ENCODE measurements at regions of chr4 and their contacts with region 1.

Region 1: DNA sequence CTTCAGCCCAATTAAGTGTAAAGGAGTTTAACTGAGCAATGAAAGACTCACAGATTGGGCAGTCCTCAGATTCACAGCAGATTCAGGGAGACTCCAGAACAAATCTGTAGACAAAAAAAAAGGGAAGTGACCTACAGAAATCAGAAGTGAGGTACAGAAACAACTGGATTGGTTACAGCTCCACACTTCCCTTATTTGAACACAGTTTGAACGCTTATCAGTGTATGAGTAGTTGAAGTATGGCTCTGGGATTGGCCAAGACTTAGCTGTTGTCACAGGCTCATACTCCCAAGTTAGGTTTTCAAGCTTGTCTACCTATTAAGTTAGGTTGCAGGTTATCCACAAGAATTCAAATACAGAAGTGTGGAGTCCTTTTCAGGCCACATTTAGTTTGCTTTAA is 112.4 kb upstream of the ELOVL6 start:
- DNase-seq: no peak
- CTCF ChIP-seq: no peak

Region 2: GRCh38 chr4:109798866-109799265 is 511.9 kb before region 1 on chr4:
- in situ Hi-C with region 1: no loop called
- DNase-seq: no peak
- CTCF ChIP-seq: no peak

Region 3: DNA sequence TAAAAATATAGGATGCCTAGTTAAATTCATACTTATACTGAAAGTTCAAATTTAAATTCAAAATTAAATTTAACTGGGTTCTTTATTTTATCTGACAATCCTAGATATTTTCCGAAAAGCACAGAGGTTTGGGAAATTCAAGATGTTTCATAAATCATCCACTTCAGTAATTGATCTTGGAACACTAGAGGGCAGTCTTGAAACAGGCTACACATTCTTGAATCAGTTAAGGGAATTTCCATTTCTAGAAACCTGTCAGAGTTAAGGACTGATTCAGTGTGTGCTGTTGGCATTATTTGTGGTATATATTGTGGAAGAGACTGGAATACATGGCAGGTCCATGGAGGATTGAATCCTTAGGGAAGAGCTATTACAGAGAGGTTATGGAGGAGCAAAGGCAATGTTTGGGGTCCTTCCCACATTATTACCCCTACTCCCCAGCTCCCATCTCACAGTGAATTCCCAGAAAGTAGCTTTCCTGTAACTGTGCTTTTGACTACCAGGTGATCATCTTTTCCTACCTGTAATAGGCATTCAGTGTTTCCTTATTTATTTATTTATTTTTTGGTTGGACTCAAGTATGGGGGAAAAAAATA is 305.2 kb before region 1 on chr4:
- in situ Hi-C with region 1: loop called (anchors 25 kb)
- DNase-seq: peak; percentile 65
- CTCF ChIP-seq: peak; percentile 68

Region 4: DNA sequence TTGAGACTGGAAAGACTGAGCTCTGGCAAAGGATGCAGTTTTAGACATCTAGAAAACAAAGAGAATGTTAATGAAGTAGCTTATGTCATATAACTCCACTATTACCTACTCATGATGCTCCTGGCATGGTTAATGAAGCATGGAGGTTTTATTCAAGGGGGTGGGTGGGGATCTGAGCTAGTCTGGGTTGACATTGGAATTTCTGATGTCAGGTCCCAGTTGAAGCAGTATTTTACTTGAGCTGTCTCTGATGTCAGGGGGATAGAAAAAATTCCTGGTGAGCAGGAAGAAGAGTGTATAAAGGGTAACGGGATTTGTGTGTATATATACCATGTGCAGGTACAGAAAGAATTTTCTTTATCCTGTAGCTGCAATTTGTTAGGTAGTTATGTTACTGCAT is 214.4 kb before region 1 on chr4:
- in situ Hi-C with region 1: no loop called
- DNase-seq: no peak
- CTCF ChIP-seq: no peak

Region 5: GRCh38 chr4:110211007-110211769 is 99.6 kb before region 1 on chr4:
- in situ Hi-C with region 1: no loop called
- DNase-seq: peak; percentile 70
- CTCF ChIP-seq: peak; percentile 46

Region 6: GRCh38 chr4:110508827-110509710 is 198.3 kb after region 1 on chr4:
- in situ Hi-C with region 1: loop called (anchors 10 kb)
- DNase-seq: peak; percentile 42
- CTCF ChIP-seq: peak; percentile 35